ENCODE measurements at regions of chr2 and their contacts with region 1.

Region 1: GRCh38 chr2:164992818-164993217 is 37.5 kb upstream of the SLC38A11 start:
- DNase-seq: no peak
- ATAC-seq: peak; percentile 58
- H3K4me3 Mint-ChIP-seq: no peak overlapping the region
- H3K27ac Mint-ChIP-seq: peak overlapping the region; percentile 83
- H3K4me1 Mint-ChIP-seq: peaks cover 46% of the 10 kb centered on the region
- H3K27me3 Mint-ChIP-seq: no peaks in the 10 kb centered on the region
- CTCF ChIP-seq: no peak

Region 2: DNA sequence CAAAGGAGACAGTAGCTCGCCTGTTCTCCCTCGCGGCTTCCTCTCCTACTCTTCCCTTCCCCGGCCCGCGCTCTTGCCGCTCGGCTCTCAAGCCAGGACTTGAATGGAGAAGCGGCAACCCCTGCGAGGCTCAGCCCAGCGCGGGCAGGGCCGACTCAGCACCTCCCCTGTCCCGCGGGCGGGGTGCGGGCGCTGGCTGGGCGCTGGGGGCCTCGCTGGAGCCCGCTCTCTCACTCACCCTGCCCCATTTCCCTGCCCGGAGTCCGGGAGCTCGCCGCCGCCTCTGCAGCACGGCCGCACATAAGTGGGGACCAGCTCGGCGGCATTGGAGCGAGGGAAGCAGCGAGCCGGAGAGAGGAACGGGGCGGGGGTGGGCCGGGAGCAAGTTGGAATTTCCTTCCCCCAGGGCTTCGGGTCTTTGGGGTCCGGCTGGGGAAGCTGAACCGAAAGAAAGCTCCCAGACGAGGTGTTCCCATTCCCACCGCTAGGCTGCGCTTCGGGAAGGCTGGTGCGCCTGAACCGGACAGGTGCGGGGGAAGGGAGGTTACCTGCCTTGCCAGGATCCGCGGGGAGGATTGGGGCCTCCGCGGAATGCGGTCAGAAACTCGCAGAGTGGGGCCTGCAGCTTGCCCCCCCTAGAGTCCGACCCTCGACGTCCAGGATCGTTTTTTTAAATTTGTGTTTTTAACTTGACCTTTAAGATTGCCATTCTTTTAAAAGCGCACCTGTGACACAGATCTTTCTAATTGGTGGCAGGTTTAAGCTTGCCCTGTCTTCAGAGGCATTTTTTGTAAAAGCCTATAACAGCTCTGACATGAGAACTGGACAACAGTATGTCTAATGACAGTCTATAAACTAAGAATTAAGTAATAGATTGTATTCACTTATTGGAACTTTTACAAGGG is 150.8 kb before region 1 on chr2 and contains the start of gene COBLL1:
- CTCF ChIA-PET with region 1: no interaction called
- POLR2A ChIA-PET with region 1: interaction called, 3 read pairs
- intact Hi-C with region 1: loop called (anchors 5 kb)
- DNase-seq: peak; percentile 65
- ATAC-seq: peak; percentile 65
- H3K4me3 Mint-ChIP-seq: peak within 1 kb of the TSS; percentile 97
- H3K27ac Mint-ChIP-seq: peak within 1 kb of the TSS; percentile 91
- H3K4me1 Mint-ChIP-seq: peaks cover 44% of the 10 kb centered on the region
- H3K27me3 Mint-ChIP-seq: no peaks in the 10 kb centered on the region
- CTCF ChIP-seq: no peak
- total RNA-seq, gene COBLL1: 182 and 222 TPM in 2 replicates

Region 3: GRCh38 chr2:165015052-165015642 is 22.3 kb after region 1 on chr2:
- CTCF ChIA-PET with region 1: interaction called, 20 read pairs
- POLR2A ChIA-PET with region 1: no interaction called
- intact Hi-C with region 1: loop called (anchors 2 kb)
- DNase-seq: no peak
- ATAC-seq: peak; percentile 35
- H3K4me3 Mint-ChIP-seq: no peak overlapping the region
- H3K27ac Mint-ChIP-seq: no peak overlapping the region
- H3K4me1 Mint-ChIP-seq: no peaks in the 10 kb centered on the region
- H3K27me3 Mint-ChIP-seq: no peaks in the 10 kb centered on the region
- CTCF ChIP-seq: peak; percentile 82

Region 4: DNA sequence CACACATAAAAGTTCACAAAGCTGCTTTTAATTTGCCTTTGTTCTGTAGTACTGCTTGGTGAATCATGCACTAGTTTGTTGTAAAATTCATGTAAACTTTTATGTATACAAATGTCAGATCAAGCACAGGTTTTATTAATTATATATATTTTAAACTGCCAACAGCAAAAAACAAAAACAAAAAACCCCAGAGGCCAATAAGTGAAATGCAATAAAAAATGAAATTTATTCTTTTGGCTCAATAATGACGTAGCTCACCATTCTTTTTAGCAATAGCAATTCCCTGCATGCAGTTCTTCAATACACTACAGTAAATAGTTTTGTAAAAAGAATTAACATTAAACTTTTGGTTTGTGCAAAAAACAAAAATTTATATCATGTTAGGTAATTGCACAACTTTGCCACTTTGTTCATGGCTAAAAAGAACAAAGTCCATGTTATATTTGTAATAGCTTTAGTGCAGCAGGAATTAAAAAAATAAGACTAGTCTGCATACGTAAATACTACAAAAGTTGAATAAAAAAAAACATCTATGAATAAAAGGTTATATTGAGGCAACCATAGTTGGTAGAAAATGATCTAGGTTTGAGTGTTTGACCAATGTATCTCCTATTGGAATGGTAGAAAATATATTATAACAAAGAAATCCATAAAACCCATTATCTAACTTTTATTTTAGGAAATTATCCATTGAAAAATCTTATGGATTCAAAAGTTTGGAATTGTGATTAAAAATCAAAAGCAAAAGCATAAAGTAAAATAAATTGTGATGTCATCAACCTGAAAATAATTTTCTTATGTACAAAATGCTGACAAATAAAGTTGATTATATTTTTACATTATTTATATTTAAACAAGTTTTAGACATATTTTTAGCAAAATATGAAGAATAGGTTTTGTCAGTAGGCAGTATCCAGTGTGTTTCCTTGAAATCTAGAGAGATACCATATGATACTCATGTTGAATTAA is 95.4 kb after region 1 on chr2:
- CTCF ChIA-PET with region 1: no interaction called
- POLR2A ChIA-PET with region 1: no interaction called
- intact Hi-C with region 1: no loop called
- DNase-seq: no peak
- ATAC-seq: no peak
- H3K4me3 Mint-ChIP-seq: no peak overlapping the region
- H3K27ac Mint-ChIP-seq: no peak overlapping the region
- H3K4me1 Mint-ChIP-seq: no peaks in the 10 kb centered on the region
- H3K27me3 Mint-ChIP-seq: no peaks in the 10 kb centered on the region
- CTCF ChIP-seq: no peak

Region 5: DNA sequence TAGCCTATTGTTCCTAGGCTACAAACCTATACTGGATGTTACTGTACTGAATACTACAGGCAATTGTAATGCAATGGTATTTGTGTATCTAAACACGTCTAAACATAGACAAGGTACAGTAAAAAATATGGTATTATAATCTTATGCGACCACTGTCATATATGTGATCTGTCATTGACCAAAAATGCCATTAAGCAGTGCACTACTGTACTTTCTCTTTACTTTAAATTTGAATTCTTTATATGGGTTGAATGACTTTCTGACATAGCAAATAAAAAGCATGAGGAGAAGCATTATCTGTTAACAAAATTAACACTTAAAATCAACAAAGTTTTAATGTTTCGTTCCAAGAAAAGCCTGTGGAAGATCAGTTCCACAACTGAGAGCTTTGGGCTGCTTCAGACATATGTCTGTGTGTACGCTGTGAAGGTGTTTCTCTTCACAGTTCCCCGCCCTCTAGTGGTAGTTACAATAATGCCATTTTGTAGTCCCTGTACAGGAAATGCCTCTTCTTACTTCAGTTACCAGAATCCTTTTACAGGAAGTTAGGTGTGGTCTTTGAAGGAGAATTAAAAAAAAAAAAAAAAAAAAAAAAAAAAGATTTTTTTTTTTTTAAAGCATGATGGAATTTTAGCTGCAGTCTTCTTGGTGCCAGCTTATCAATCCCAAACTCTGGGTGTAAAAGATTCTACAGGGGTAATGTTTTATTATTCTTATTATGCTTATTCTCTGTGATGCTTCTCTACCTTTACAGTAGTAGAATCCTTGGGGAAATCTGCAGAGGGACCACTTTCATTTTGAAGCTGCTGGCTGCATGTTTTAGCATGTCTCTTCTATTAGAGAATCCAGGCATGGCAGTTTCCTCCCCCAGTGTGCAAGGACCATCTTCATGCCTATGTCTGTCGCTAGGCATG is 300.9 kb after region 1 on chr2:
- CTCF ChIA-PET with region 1: interaction called, 5 read pairs
- POLR2A ChIA-PET with region 1: no interaction called
- intact Hi-C with region 1: loop called (anchors 1 kb)
- DNase-seq: no peak
- ATAC-seq: peak; percentile 100
- H3K4me3 Mint-ChIP-seq: no peak overlapping the region
- H3K27ac Mint-ChIP-seq: no peak overlapping the region
- H3K4me1 Mint-ChIP-seq: peaks cover 4% of the 10 kb centered on the region
- H3K27me3 Mint-ChIP-seq: peaks cover 7% of the 10 kb centered on the region
- CTCF ChIP-seq: no peak

Region 6: DNA sequence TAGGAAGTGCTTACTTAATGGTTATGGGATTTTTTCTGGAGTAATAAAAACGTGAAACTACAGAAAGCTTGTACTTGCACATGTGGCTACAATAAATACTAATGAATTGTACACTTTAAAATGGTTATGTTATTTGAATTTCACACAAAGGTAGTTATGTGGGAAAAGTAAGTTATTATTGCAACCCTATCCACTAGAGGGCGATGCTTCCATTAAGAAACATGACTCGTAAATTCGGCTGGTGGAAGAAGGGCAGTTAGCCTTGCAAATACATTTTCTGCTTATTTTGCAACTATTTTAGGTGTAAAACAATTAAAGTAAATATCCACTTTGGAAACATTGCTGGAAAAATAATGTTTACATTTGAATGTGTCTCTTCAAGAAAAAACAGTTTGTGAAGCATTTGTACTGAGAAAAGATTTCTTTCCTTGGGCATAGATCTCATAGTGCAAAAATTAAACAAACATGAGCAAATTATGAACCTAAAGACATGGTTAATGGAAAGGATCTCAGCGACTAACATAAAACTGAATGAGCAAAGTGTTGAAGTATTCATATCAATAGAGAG is 408.6 kb after region 1 on chr2:
- CTCF ChIA-PET with region 1: no interaction called
- POLR2A ChIA-PET with region 1: no interaction called
- intact Hi-C with region 1: loop called (anchors 5 kb)
- DNase-seq: no peak
- ATAC-seq: no peak
- H3K4me3 Mint-ChIP-seq: no peak overlapping the region
- H3K27ac Mint-ChIP-seq: no peak overlapping the region
- H3K4me1 Mint-ChIP-seq: no peaks in the 10 kb centered on the region
- H3K27me3 Mint-ChIP-seq: peaks cover 13% of the 10 kb centered on the region
- CTCF ChIP-seq: peak; percentile 45

Region 7: GRCh38 chr2:165953655-165954606 is 961.1 kb after region 1 on chr2 and contains the start of gene TTC21B:
- CTCF ChIA-PET with region 1: no interaction called
- POLR2A ChIA-PET with region 1: no interaction called
- intact Hi-C with region 1: loop called (anchors 5 kb)
- DNase-seq: peak; percentile 92
- ATAC-seq: peak; percentile 96
- H3K4me3 Mint-ChIP-seq: no peak within 1 kb of the TSS
- H3K27ac Mint-ChIP-seq: peak within 1 kb of the TSS; percentile 56
- H3K4me1 Mint-ChIP-seq: peaks cover 11% of the 10 kb centered on the region
- H3K27me3 Mint-ChIP-seq: no peaks in the 10 kb centered on the region
- CTCF ChIP-seq: no peak
- total RNA-seq, gene TTC21B: 24.9 and 29.2 TPM in 2 replicates

Region 8: DNA sequence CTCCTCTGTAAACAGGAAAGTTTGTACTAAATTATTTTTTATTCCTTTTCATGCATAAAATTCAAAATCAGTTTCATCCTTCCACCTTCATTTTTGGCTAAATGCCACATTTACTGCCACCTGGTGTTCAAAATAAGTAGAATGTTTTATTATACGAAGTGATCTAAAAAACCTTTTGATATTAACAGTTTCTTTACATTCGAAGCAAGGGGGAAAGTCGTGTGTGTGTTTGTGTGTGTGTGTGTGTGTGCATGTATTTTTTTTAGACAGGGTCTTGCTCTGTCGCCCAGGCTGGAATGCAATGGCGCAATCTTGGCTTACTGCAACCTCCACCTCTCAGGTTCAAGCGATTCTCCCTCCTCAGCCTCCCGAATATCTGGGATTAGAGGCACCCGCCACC is 1392.0 kb after region 1 on chr2:
- CTCF ChIA-PET with region 1: no interaction called
- POLR2A ChIA-PET with region 1: no interaction called
- intact Hi-C with region 1: loop called (anchors 10 kb)
- DNase-seq: no peak
- ATAC-seq: no peak
- H3K4me3 Mint-ChIP-seq: no peak overlapping the region
- H3K27ac Mint-ChIP-seq: no peak overlapping the region
- H3K4me1 Mint-ChIP-seq: no peaks in the 10 kb centered on the region
- H3K27me3 Mint-ChIP-seq: peaks cover 4% of the 10 kb centered on the region
- CTCF ChIP-seq: no peak